PC-9 (cell line): ENCODE measurements at regions of chr9 and their contacts with region 1.

Region 1: GRCh38 chr9:127178686-127179632 is 56.5 kb upstream of the ANGPTL2 start:
- DNase-seq: no peak
- H3K4me3 ChIP-seq: no peak overlapping the region
- H3K27ac ChIP-seq: no peak overlapping the region
- H3K4me1 ChIP-seq: no peaks in the 10 kb centered on the region
- H3K27me3 ChIP-seq: no peaks in the 10 kb centered on the region
- CTCF ChIP-seq: no peak

Region 2: GRCh38 chr9:127463911-127464310 is 285.0 kb after region 1 on chr9:
- CTCF ChIA-PET with region 1: interaction called, 15 read pairs
- POLR2A ChIA-PET with region 1: no interaction called
- intact Hi-C with region 1: no loop called
- DNase-seq: no peak
- H3K4me3 ChIP-seq: no peak overlapping the region
- H3K27ac ChIP-seq: no peak overlapping the region
- H3K4me1 ChIP-seq: no peaks in the 10 kb centered on the region
- H3K27me3 ChIP-seq: no peaks in the 10 kb centered on the region
- CTCF ChIP-seq: no peak

Region 3: GRCh38 chr9:127489471-127490115 is 310.6 kb after region 1 on chr9:
- CTCF ChIA-PET with region 1: no interaction called
- POLR2A ChIA-PET with region 1: no interaction called
- intact Hi-C with region 1: no loop called
- DNase-seq: no peak
- H3K4me3 ChIP-seq: no peak overlapping the region
- H3K27ac ChIP-seq: no peak overlapping the region
- H3K4me1 ChIP-seq: no peaks in the 10 kb centered on the region
- H3K27me3 ChIP-seq: no peaks in the 10 kb centered on the region
- CTCF ChIP-seq: no peak